ENCODE measurements at regions of chr22 and their contacts with region 1.

Region 1: GRCh38 chr22:28442264-28442710 is 237.4 kb downstream of the TTC28 start:
- DNase-seq: peak; percentile 54 to 79 (median 77)
- ATAC-seq: peak; percentile 91
- H3K4me3 ChIP-seq: peak overlapping the region; percentile 72
- H3K4me3 Mint-ChIP-seq: peak overlapping the region; percentile 88 to 97 (median 94)
- H3K27ac ChIP-seq: peak overlapping the region; percentile 58
- H3K27ac Mint-ChIP-seq: peak overlapping the region; percentile 66 to 90 (median 84)
- H3K4me1 ChIP-seq: peaks cover 0 to 15% of the 10 kb centered on the region in 2 donors
- H3K4me1 Mint-ChIP-seq: peaks cover 10 to 27% (median 24%) of the 10 kb centered on the region in 7 donors
- H3K27me3 ChIP-seq: peaks cover 0 to 4% of the 10 kb centered on the region in 2 donors
- H3K27me3 Mint-ChIP-seq: peaks cover 0 to 26% (median 0%) of the 10 kb centered on the region in 5 donors

Region 2: GRCh38 chr22:27885977-27886842 is 556.1 kb before region 1 on chr22:
- CTCF ChIA-PET with region 1: interaction called, 4 read pairs
- POLR2A ChIA-PET with region 1: no interaction called
- intact Hi-C with region 1: loop called in 1 of 2 experiments (anchors 1 kb)
- DNase-seq: peak in 7 of 9 donors; percentile 21 to 53 (median 36)
- ATAC-seq: peak; percentile 67
- H3K4me3 ChIP-seq: no peak overlapping the region
- H3K4me3 Mint-ChIP-seq: no peak overlapping the region
- H3K27ac ChIP-seq: no peak overlapping the region
- H3K27ac Mint-ChIP-seq: peak overlapping the region in 2 of 9 donors; percentile 18 to 33
- H3K4me1 ChIP-seq: no peaks in the 10 kb centered on the region
- H3K4me1 Mint-ChIP-seq: peaks cover 0 to 18% (median 6%) of the 10 kb centered on the region in 7 donors
- H3K27me3 ChIP-seq: no peaks in the 10 kb centered on the region
- H3K27me3 Mint-ChIP-seq: no peaks in the 10 kb centered on the region

Region 3: DNA sequence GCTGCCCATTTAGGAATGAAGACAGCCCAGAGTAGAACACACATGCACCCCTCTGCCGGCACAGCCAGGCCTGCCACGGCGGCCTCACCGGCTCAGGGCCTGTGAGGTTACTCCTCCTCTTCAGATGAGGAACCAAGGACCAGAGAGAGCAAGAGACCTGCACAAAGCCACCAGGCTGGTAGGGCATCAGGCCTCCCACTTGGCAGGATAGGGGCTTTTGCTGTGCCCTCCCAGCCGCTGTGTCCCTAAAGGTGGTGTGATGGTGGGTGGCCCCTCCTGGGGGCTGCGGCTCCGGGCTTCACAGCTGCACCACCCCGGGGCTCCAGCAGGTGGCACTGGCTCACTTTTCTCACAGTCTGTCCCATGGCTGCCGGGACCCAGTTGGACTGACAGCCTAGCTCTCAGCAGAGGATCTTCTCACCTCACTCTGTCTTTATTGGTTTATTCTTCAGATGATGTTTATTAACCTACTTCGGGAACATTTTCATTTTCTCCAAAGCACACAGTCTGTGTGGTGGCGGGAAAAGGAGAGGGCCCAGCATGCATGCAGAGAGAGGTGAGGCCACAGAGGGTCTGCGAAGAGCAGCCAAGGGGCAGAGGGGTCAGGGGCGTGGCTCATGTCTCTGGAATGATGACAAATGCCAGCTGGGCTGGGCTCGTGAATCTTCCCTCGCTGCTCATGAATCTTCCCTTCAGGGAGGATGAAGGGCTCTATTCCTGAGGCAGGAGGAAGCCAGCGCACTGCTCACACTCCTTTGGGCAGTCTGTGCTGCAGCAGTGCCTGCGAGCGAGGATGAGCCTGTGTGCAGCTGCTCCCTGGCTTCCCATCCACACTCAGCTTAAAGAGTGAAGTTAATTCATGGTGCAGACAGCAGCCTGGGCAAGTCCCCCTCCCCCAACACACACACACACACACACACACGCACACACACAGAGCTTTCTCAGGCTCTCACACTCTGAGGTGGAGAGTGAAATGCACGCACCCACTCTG is 422.1 kb before region 1 on chr22:
- CTCF ChIA-PET with region 1: interaction called, 9 read pairs
- POLR2A ChIA-PET with region 1: no interaction called
- intact Hi-C with region 1: loop called (anchors 1 kb)
- DNase-seq: peak; percentile 27 to 69 (median 61)
- ATAC-seq: peak; percentile 81
- H3K4me3 ChIP-seq: no peak overlapping the region
- H3K4me3 Mint-ChIP-seq: no peak overlapping the region
- H3K27ac ChIP-seq: no peak overlapping the region
- H3K27ac Mint-ChIP-seq: no peak overlapping the region
- H3K4me1 ChIP-seq: no peaks in the 10 kb centered on the region
- H3K4me1 Mint-ChIP-seq: peaks cover 0 to 8% (median 0%) of the 10 kb centered on the region in 7 donors
- H3K27me3 ChIP-seq: no peaks in the 10 kb centered on the region
- H3K27me3 Mint-ChIP-seq: no peaks in the 10 kb centered on the region

Region 4: GRCh38 chr22:28247667-28248363 is 194.5 kb before region 1 on chr22:
- CTCF ChIA-PET with region 1: no interaction called
- POLR2A ChIA-PET with region 1: no interaction called
- intact Hi-C with region 1: loop called in 1 of 2 experiments (anchors 1 kb)
- DNase-seq: no peak
- ATAC-seq: no peak
- H3K4me3 ChIP-seq: no peak overlapping the region
- H3K4me3 Mint-ChIP-seq: no peak overlapping the region
- H3K27ac ChIP-seq: no peak overlapping the region
- H3K27ac Mint-ChIP-seq: no peak overlapping the region
- H3K4me1 ChIP-seq: no peaks in the 10 kb centered on the region
- H3K4me1 Mint-ChIP-seq: peaks cover 0 to 2% (median 0%) of the 10 kb centered on the region in 7 donors
- H3K27me3 ChIP-seq: no peaks in the 10 kb centered on the region
- H3K27me3 Mint-ChIP-seq: peaks cover 0 to 10% (median 3%) of the 10 kb centered on the region in 5 donors

Region 5: DNA sequence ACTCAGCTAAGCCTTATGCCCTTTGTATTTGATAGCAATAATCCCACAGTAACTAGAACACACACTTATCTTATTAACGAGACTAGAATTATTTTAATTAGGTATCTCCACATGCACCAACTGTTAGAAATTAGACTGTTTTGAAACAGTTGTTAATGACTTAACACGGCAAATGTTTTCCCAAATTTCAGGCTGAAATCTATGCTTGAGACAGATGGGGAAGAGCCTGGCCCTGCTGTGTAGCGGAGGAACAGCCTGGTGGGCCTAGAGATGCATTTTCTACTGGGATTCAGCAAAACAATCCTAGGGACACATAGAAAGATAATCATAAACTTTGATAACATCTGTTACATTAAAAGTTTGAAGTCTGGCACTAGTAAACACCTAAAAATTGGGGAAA is 36.0 kb before region 1 on chr22:
- CTCF ChIA-PET with region 1: no interaction called
- POLR2A ChIA-PET with region 1: no interaction called
- intact Hi-C with region 1: no loop called
- DNase-seq: no peak
- ATAC-seq: no peak
- H3K4me3 ChIP-seq: no peak overlapping the region
- H3K4me3 Mint-ChIP-seq: no peak overlapping the region
- H3K27ac ChIP-seq: no peak overlapping the region
- H3K27ac Mint-ChIP-seq: no peak overlapping the region
- H3K4me1 ChIP-seq: no peaks in the 10 kb centered on the region
- H3K4me1 Mint-ChIP-seq: peaks cover 0 to 19% (median 0%) of the 10 kb centered on the region in 7 donors
- H3K27me3 ChIP-seq: no peaks in the 10 kb centered on the region
- H3K27me3 Mint-ChIP-seq: no peaks in the 10 kb centered on the region

Region 6: DNA sequence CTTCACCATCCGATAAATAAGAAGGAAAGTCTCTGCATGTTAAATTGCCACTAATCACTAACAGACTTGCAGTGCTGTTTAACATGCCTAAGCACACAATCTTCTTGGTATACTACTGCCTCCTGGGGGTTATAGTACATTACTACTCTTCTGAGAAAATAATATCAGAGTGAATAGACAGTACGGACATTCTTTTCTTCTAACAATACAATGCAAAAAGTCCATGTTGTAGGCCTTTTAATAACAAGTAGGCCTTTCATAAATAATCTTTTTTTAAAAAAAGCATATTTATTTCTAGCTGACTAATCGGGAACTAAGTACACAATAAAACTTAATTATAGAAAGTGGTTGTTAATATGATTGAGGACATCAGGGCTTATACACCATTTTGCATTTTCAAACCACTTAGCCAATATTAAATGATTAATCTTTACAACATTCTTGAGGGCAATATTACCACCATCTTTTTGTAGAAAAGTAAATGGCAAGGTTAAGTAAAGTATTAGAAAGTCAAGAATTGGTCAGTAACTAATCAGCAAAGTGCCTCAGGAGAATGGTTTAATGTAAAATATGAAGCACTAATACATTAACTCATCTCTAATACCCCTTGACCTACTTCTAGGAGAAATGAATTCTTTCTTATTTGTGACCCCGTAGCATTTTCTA is 152.6 kb after region 1 on chr22:
- CTCF ChIA-PET with region 1: interaction called, 3 read pairs
- POLR2A ChIA-PET with region 1: no interaction called
- intact Hi-C with region 1: loop called in 1 of 2 experiments (anchors 2 kb)
- DNase-seq: peak in 7 of 9 donors; percentile 14 to 57 (median 51)
- ATAC-seq: peak; percentile 83
- H3K4me3 ChIP-seq: no peak overlapping the region
- H3K4me3 Mint-ChIP-seq: no peak overlapping the region
- H3K27ac ChIP-seq: no peak overlapping the region
- H3K27ac Mint-ChIP-seq: no peak overlapping the region
- H3K4me1 ChIP-seq: no peaks in the 10 kb centered on the region
- H3K4me1 Mint-ChIP-seq: no peaks in the 10 kb centered on the region
- H3K27me3 ChIP-seq: peaks cover 0 to 4% of the 10 kb centered on the region in 2 donors
- H3K27me3 Mint-ChIP-seq: peaks cover 0 to 41% (median 18%) of the 10 kb centered on the region in 5 donors